Panc1 (cell line): ENCODE measurements at regions of chr11 and their contacts with region 1.

Region 1: GRCh38 chr11:122634497-122634896 is 21.0 kb upstream of the UBASH3B start:
- DNase-seq: no peak
- ATAC-seq: peak; percentile 43; the same call in 1 of the 2 replicates
- H3K4me3 ChIP-seq: no peak overlapping the region
- H3K27ac ChIP-seq: no peak overlapping the region
- H3K4me1 ChIP-seq: no peaks in the 10 kb centered on the region
- H3K27me3 ChIP-seq: no peaks in the 10 kb centered on the region
- CTCF ChIP-seq: no peak

Region 2: DNA sequence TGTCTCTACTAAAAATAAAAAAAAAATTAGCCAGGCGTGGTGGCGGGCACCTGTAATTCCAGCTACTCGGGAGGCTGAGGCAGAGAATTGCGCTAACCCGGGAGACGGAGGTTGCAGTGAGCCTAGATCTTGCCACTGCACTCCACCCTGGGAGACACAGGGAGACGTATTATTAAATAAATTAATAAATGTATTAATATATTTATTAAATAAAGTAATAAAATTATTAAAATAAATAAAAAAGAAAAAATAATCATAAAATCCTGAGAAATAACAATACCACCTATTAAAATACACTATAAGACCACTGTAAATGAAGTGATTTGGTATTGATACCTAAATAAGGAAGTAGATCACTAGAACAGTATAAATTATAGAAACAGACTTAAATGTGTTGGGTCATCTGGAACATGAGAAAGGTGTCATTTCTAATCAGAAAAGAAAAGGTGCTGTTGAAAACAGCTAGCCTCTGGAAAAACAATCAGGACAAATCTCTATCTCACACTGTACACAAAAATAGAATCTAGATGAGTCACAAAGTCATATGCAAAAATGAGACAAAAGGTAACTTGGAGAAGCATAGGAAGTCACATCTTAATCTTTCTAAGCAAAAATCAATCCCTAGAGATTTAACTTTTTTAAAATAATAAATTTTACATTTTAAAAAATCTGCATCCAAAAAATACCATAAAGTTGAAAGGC is 22.2 kb before region 1 on chr11:
- CTCF ChIA-PET with region 1: no interaction called
- POLR2A ChIA-PET with region 1: interaction called, 16 read pairs
- in situ Hi-C with region 1: no loop called
- intact Hi-C with region 1: no loop called
- DNase-seq: no peak
- ATAC-seq: no peak
- H3K4me3 ChIP-seq: no peak overlapping the region
- H3K27ac ChIP-seq: no peak overlapping the region
- H3K4me1 ChIP-seq: no peaks in the 10 kb centered on the region
- H3K27me3 ChIP-seq: no peaks in the 10 kb centered on the region
- CTCF ChIP-seq: no peak